T-cell (primary cell): ENCODE measurements at regions of chr14 and their contacts with region 1.

Region 1: DNA sequence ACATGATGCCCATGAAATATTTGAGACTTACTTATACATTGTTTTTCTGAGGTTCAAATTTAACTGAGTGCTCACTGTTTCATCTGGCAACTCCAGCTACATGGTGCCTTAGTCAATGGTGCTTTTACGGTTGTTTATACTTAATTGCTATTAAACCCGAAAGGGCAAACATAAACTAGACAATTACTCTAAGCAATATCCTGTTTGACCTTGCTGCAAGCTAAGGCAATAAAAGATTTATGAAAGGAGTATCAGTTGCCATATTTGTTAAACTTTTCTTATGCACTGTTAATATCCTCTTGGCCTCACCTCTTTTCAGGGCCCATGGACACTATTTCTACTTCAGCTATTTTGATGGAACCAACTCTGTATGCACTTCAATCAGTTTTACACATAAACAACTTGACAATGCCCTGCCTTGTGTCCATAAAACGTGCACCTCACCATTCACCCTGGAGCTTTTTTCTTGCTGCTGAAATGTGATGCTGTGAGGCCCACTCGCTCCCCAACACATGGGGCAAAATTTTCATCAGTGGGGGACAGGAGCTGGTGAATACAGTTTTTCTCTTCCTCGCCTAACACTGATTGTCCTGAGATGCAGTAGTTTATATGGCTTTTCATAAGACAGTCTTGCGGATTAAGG is 64.1 kb upstream of the HIF1A start:
- DNase-seq: no peak
- ATAC-seq: no peak
- H3K4me3 ChIP-seq: no peak overlapping the region
- H3K4me3 Mint-ChIP-seq: no peak overlapping the region
- H3K27ac ChIP-seq: no peak overlapping the region
- H3K27ac Mint-ChIP-seq: no peak overlapping the region
- H3K4me1 ChIP-seq: no peaks in the 10 kb centered on the region
- H3K4me1 Mint-ChIP-seq: peaks cover 0 to 13% (median 3%) of the 10 kb centered on the region in 3 donors
- H3K27me3 ChIP-seq: no peaks in the 10 kb centered on the region
- H3K27me3 Mint-ChIP-seq: no peaks in the 10 kb centered on the region

Region 2: GRCh38 chr14:61598980-61599379 is 32.2 kb before region 1 on chr14:
- CTCF ChIA-PET with region 1: no interaction called
- POLR2A ChIA-PET with region 1: interaction called in 1 of 2 experiments, 13 read pairs
- DNase-seq: peak in 2 of 35 experiments; percentile 5 to 12
- ATAC-seq: peak in 1 of 4 experiments; percentile 54
- H3K4me3 ChIP-seq: no peak overlapping the region
- H3K4me3 Mint-ChIP-seq: no peak overlapping the region
- H3K27ac ChIP-seq: no peak overlapping the region
- H3K27ac Mint-ChIP-seq: no peak overlapping the region
- H3K4me1 ChIP-seq: peaks cover 11 to 17% of the 10 kb centered on the region in 2 experiments
- H3K4me1 Mint-ChIP-seq: peaks cover 27 to 37% (median 29%) of the 10 kb centered on the region in 3 donors
- H3K27me3 ChIP-seq: no peaks in the 10 kb centered on the region
- H3K27me3 Mint-ChIP-seq: no peaks in the 10 kb centered on the region

Region 3: GRCh38 chr14:61876362-61877043 is 245.3 kb after region 1 on chr14:
- CTCF ChIA-PET with region 1: no interaction called
- POLR2A ChIA-PET with region 1: no interaction called
- DNase-seq: no peak
- ATAC-seq: no peak
- H3K4me3 ChIP-seq: no peak overlapping the region
- H3K4me3 Mint-ChIP-seq: no peak overlapping the region
- H3K27ac ChIP-seq: no peak overlapping the region
- H3K27ac Mint-ChIP-seq: no peak overlapping the region
- H3K4me1 ChIP-seq: no peaks in the 10 kb centered on the region
- H3K4me1 Mint-ChIP-seq: no peaks in the 10 kb centered on the region
- H3K27me3 ChIP-seq: peaks cover 0 to 14% of the 10 kb centered on the region in 2 experiments
- H3K27me3 Mint-ChIP-seq: peaks cover 48 to 50% of the 10 kb centered on the region in 2 donors